A673 (cell line): ENCODE measurements at regions of chrX and their contacts with region 1.

Region 1: GRCh38 chrX:151042842-151043241 is 59.7 kb downstream of the HMGB3 start:
- DNase-seq: no peak
- H3K4me3 ChIP-seq: no peak overlapping the region
- H3K27ac ChIP-seq: no peak overlapping the region
- H3K4me1 ChIP-seq: no peaks in the 10 kb centered on the region
- H3K27me3 ChIP-seq: no peaks in the 10 kb centered on the region
- CTCF ChIP-seq: no peak

Region 2: GRCh38 chrX:152932144-152932543 is 1889.3 kb after region 1 on chrX:
- CTCF ChIA-PET with region 1: interaction called, 14 read pairs
- POLR2A ChIA-PET with region 1: no interaction called
- intact Hi-C with region 1: no loop called
- DNase-seq: no peak
- H3K4me3 ChIP-seq: no peak overlapping the region
- H3K27ac ChIP-seq: no peak overlapping the region
- H3K4me1 ChIP-seq: no peaks in the 10 kb centered on the region
- H3K27me3 ChIP-seq: no peaks in the 10 kb centered on the region
- CTCF ChIP-seq: no peak